Activated naive CD8-positive, alpha-beta T cell treated with anti-CD3 and anti-CD28 coated beads, Interleukin-2, amount 10 ng/mL, durations not matched to agents 7 days and 5 days (primary cell): ENCODE measurements at regions of chr19 and their contacts with region 1.

Region 1: GRCh38 chr19:52369559-52370340 is at the start of gene ZNF880:
- DNase-seq: peak; percentile 96
- ATAC-seq: peak; percentile 97
- H3K4me3 Mint-ChIP-seq: peak within 1 kb of the TSS; percentile 91
- H3K27ac Mint-ChIP-seq: peak within 1 kb of the TSS; percentile 98
- H3K4me1 Mint-ChIP-seq: peaks cover 6% of the 10 kb centered on the region
- H3K27me3 Mint-ChIP-seq: no peaks in the 10 kb centered on the region
- total RNA-seq, gene ZNF880: 30.1 to 31.1 TPM

Region 2: GRCh38 chr19:52120286-52120685 is 249.5 kb before region 1 on chr19:
- POLR2A ChIA-PET with region 1: no interaction called
- DNase-seq: no peak
- ATAC-seq: no peak
- H3K4me3 Mint-ChIP-seq: no peak overlapping the region
- H3K27ac Mint-ChIP-seq: no peak overlapping the region
- H3K4me1 Mint-ChIP-seq: no peaks in the 10 kb centered on the region
- H3K27me3 Mint-ChIP-seq: no peaks in the 10 kb centered on the region

Region 3: DNA sequence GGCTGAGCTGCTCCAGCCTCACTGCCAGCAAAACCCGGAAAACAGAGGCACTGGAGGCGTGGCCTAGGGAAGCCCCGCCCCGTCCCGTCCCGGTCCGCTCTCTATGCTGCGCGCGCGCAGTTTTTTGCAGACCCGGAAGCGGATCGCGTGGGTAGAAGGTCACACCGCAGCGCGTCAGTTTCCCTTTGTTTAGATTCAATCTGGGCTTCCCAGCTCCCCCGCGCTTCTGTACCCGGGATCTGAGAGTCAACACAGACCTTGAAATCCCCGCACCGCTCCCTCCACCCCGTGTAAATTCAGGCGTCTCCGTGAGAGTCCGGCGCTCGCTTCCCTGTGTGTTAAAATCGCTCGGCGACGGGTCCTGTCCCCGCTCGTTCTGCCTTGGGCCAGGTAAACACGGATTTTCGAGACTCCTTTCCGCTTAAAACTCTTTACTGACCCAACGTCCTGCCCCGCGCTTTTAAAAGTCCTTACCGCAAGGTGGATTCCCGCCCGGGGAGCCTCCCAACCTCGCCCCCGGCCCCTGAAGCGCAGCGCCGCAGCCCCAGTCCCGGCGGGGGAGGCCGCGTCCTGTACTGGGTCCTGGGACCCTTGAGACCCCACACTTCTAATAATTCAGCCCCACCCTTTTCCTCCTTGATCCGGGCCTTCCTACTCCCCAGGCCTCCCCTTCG is 33.5 kb before region 1 on chr19 and contains the start of gene ZNF610:
- POLR2A ChIA-PET with region 1: interaction called, 15 read pairs
- DNase-seq: peak; percentile 96
- ATAC-seq: peak; percentile 94
- H3K4me3 Mint-ChIP-seq: peak within 1 kb of the TSS; percentile 91
- H3K27ac Mint-ChIP-seq: peak within 1 kb of the TSS; percentile 95
- H3K4me1 Mint-ChIP-seq: peaks cover 11% of the 10 kb centered on the region
- H3K27me3 Mint-ChIP-seq: no peaks in the 10 kb centered on the region
- total RNA-seq, gene ZNF610: 3.3 to 3.9 TPM

Region 4: GRCh38 chr19:52397310-52398080 is 27.7 kb after region 1 on chr19 and contains the start of gene ZNF528:
- POLR2A ChIA-PET with region 1: interaction called, 17 read pairs
- DNase-seq: peak; percentile 96
- ATAC-seq: peak; percentile 99
- H3K4me3 Mint-ChIP-seq: peak within 1 kb of the TSS; percentile 90
- H3K27ac Mint-ChIP-seq: peak within 1 kb of the TSS; percentile 94
- H3K4me1 Mint-ChIP-seq: peaks cover 15% of the 10 kb centered on the region
- H3K27me3 Mint-ChIP-seq: no peaks in the 10 kb centered on the region
- total RNA-seq, gene ZNF528: 31.7 to 33.0 TPM

Region 5: GRCh38 chr19:52442179-52442578 is 72.4 kb after region 1 on chr19:
- POLR2A ChIA-PET with region 1: no interaction called
- DNase-seq: no peak
- ATAC-seq: no peak
- H3K4me3 Mint-ChIP-seq: no peak overlapping the region
- H3K27ac Mint-ChIP-seq: no peak overlapping the region
- H3K4me1 Mint-ChIP-seq: no peaks in the 10 kb centered on the region
- H3K27me3 Mint-ChIP-seq: no peaks in the 10 kb centered on the region

Region 6: GRCh38 chr19:52601025-52601973 is 231.5 kb after region 1 on chr19:
- POLR2A ChIA-PET with region 1: no interaction called
- DNase-seq: peak; percentile 97
- ATAC-seq: peak; percentile 95
- H3K4me3 Mint-ChIP-seq: peak overlapping the region; percentile 87
- H3K27ac Mint-ChIP-seq: peak overlapping the region; percentile 77
- H3K4me1 Mint-ChIP-seq: peaks cover 19% of the 10 kb centered on the region
- H3K27me3 Mint-ChIP-seq: no peaks in the 10 kb centered on the region